ENCODE measurements at regions of chr3 and their contacts with region 1.

Region 1: DNA sequence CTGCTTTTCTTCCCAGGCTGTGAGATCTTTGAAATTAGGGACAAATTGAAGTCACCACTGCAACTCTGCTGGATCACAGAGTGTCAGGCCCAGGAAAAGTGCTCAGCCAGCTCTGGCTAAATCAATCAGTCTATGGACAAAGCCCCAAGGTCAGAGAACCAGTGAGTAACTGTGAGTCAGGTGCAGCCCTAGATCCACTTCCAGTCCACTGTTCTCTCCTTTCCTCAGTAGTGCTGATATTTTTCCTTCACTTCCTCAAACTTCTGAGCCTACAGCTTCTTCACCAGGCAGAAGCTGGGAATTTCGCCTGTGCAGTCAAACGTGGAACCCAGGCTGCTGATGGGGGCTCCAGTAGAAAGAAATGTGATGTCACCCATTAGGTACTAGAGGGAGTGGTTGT is 75.1 kb upstream of the TRIM42 start:
- DNase-seq: no peak
- ATAC-seq: no peak
- H3K4me3 ChIP-seq: no peak overlapping the region
- H3K4me3 Mint-ChIP-seq: no peak overlapping the region
- H3K27ac ChIP-seq: no peak overlapping the region
- H3K27ac Mint-ChIP-seq: no peak overlapping the region
- H3K4me1 ChIP-seq: no peaks in the 10 kb centered on the region
- H3K4me1 Mint-ChIP-seq: no peaks in the 10 kb centered on the region
- H3K27me3 ChIP-seq: no peaks in the 10 kb centered on the region
- H3K27me3 Mint-ChIP-seq: no peaks in the 10 kb centered on the region
- CTCF ChIP-seq: no peak

Region 2: GRCh38 chr3:140577911-140578310 is 24.9 kb before region 1 on chr3:
- CTCF ChIA-PET with region 1: no interaction called
- POLR2A ChIA-PET with region 1: no interaction called
- intact Hi-C with region 1: loop called in 1 of 2 experiments (anchors 1 kb)
- DNase-seq: no peak
- ATAC-seq: no peak
- H3K4me3 ChIP-seq: no peak overlapping the region
- H3K4me3 Mint-ChIP-seq: no peak overlapping the region
- H3K27ac ChIP-seq: no peak overlapping the region
- H3K27ac Mint-ChIP-seq: no peak overlapping the region
- H3K4me1 ChIP-seq: no peaks in the 10 kb centered on the region
- H3K4me1 Mint-ChIP-seq: no peaks in the 10 kb centered on the region
- H3K27me3 ChIP-seq: no peaks in the 10 kb centered on the region
- H3K27me3 Mint-ChIP-seq: peaks cover 9% of the 10 kb centered on the region
- CTCF ChIP-seq: no peak

Region 3: DNA sequence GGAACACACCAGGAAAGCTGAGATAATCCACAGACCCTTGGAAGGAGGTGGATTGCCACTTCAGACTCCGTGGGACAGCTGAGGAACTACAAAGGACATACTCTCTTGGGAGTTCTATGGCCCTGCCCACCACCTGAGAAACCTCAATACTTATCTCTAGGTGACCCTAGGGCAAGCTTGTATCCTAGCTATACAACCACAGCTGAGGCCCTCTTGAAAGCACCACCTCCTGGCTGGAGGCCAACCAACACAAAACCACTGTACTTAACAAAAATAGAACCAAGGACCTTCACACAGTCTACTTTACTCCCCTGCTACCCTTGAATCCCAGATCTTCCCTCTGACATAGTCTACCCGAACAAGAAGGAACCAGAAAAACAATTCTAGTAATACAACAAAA is 14.4 kb after region 1 on chr3:
- CTCF ChIA-PET with region 1: no interaction called
- POLR2A ChIA-PET with region 1: no interaction called
- intact Hi-C with region 1: no loop called
- DNase-seq: no peak
- ATAC-seq: no peak
- H3K4me3 ChIP-seq: no peak overlapping the region
- H3K4me3 Mint-ChIP-seq: no peak overlapping the region
- H3K27ac ChIP-seq: no peak overlapping the region
- H3K27ac Mint-ChIP-seq: no peak overlapping the region
- H3K4me1 ChIP-seq: no peaks in the 10 kb centered on the region
- H3K4me1 Mint-ChIP-seq: no peaks in the 10 kb centered on the region
- H3K27me3 ChIP-seq: no peaks in the 10 kb centered on the region
- H3K27me3 Mint-ChIP-seq: peaks cover 6% of the 10 kb centered on the region
- CTCF ChIP-seq: no peak

Measured in CD8-positive, alpha-beta T cell (primary cell).